Thyroid gland (tissue), 4 donors: ENCODE measurements at regions of chr5 and their contacts with region 1.

Region 1: GRCh38 chr5:140564196-140565023 is at the starts of genes APBB3 and SLC35A4:
- DNase-seq: peak; percentile 97 to 98
- H3K4me3 ChIP-seq: peak within 1 kb of the TSS; percentile 53 to 89 (median 59)
- H3K27ac ChIP-seq: peak within 1 kb of the TSS; percentile 93 to 97 (median 96)
- H3K4me1 ChIP-seq: peaks cover 25 to 37% of the 10 kb centered on the region in 2 donors
- H3K27me3 ChIP-seq: no peaks in the 10 kb centered on the region
- CTCF ChIP-seq: peak in 1 of 6 experiments; percentile 20
- POLR2A ChIP-seq: peak; percentile 41 to 87
- total RNA-seq, gene APBB3: 20.2 to 33.5 (median 26.1) TPM
- total RNA-seq, gene SLC35A4: 64.2 to 114 (median 74.0) TPM

Region 2: DNA sequence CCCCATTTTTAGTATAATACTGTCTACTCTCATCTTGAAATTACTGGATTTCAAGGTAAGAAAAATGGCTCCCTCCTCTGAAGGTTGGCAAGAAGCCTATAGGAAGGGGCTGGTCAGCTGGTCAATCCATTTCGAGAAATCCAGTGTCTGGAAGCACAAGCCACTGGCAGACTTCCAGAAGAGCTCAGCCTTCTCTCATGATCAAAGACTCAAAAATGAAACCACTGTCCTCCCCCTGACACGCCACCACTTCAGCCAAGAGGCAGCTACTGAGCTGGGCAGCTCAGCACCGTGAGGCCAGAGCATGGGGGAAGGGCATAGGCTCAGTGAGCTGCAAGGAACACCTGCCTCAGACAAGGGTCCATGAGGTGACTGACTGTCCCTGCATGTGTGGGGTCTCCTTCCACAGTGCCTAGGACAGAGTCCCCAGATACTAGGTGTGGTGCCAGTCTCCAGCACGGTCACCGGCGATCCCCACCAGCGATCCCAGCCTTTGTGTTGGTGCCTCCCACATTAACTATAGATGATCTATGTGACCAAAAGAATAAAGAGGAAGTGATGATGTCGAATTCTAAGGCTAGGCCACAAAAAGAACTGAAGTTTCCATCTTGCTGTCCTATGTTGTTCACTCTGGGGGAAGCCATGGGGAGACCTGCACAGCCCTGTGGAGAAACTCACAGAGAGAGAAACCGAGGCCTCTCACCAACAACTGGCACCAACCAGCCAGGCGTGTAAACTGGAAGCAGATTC is 1589.1 kb before region 1 on chr5:
- intact Hi-C with region 1: no loop called
- DNase-seq: peak; percentile 91 to 92
- H3K4me3 ChIP-seq: no peak overlapping the region
- H3K27ac ChIP-seq: peak overlapping the region; percentile 46 to 65 (median 57)
- H3K4me1 ChIP-seq: peaks cover 27 to 50% of the 10 kb centered on the region in 2 donors
- H3K27me3 ChIP-seq: no peaks in the 10 kb centered on the region
- CTCF ChIP-seq: no peak
- POLR2A ChIP-seq: no peak

Region 3: DNA sequence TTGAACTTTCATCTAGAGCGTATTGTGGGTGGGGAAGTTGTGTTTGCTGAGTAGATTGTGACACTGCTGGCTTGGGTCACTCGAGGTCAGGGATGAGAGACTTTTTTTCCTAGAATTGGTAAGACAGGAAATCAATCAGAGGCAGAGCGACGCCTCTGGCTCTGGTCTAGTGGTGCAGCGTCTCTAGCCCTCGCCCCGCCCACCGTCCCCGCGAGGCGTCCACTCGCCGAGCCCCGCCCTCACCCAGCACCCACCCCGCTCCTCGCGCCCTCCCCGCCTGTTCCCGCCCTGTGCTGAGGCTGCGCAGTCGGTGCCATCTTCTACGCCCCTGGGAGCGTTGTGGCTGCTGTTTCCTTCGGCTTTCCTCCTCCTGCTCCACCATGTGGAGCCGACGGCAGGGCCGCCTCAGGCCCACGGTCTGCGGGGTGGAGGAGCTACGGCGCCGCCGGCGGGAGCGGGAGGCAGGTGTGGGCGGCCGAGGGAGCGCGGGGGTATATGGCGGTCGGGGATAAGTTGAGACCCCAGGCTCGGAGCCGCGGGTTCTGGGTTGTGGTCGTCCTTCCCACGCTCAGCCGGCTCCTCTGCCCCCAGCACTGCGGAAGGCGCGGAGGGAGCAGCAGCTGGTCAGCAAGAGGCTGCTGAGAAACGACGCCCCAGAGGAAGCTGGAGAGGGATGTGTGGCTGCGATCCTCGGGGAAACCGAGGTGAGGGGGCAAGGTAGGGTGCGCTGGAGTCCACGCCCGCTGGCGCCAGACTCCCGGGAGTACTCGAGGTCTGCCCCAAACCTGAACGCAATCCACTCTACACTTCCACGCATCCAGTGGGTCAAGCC is 75.0 kb after region 1 on chr5 and contains the start of gene TMCO6:
- intact Hi-C with region 1: loop called (anchors 5 kb)
- DNase-seq: peak; percentile 98 to 99
- H3K4me3 ChIP-seq: peak within 1 kb of the TSS; percentile 63 to 80 (median 66)
- H3K27ac ChIP-seq: peak within 1 kb of the TSS; percentile 89 to 94 (median 89)
- H3K4me1 ChIP-seq: peaks cover 11 to 13% of the 10 kb centered on the region in 2 donors
- H3K27me3 ChIP-seq: no peaks in the 10 kb centered on the region
- CTCF ChIP-seq: peak in 5 of 6 experiments; percentile 27 to 83 (median 65)
- POLR2A ChIP-seq: peak; percentile 42 to 70
- total RNA-seq, gene TMCO6: 16.1 to 48.7 (median 29.3) TPM

Region 4: DNA sequence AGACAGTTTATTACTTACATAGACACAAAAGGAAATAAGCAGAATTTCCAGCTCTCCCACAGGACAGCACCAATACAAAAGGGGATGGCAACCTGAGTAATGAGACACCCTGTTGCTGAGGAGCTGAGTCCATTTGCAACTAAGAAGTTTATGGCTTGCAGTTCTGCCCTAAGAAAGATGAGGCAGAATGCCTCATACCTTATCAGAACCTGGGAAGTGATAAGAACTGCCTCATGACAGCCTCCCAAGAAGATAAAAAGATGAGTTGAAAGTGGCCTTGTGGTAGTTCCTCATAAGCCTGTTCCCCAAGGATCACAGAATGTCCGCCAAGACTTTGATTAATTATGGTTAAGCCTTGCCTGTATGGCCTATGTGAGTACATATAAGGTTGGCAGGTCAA is 177.6 kb after region 1 on chr5:
- intact Hi-C with region 1: no loop called
- DNase-seq: no peak
- H3K4me3 ChIP-seq: no peak overlapping the region
- H3K27ac ChIP-seq: no peak overlapping the region
- H3K4me1 ChIP-seq: no peaks in the 10 kb centered on the region
- H3K27me3 ChIP-seq: no peaks in the 10 kb centered on the region
- CTCF ChIP-seq: no peak
- POLR2A ChIP-seq: no peak